ENCODE measurements at regions of chrX and their contacts with region 1.

Region 1: GRCh38 chrX:110847334-110847733 is 51.7 kb upstream of the CHRDL1 start:
- DNase-seq: peak; percentile 52 to 82 (median 66)
- H3K4me3 ChIP-seq: no peak overlapping the region
- H3K27ac ChIP-seq: no peak overlapping the region
- H3K4me1 ChIP-seq: no peaks in the 10 kb centered on the region
- H3K27me3 ChIP-seq: peaks cover 0 to 3% (median 0%) of the 10 kb centered on the region in 5 experiments

Region 2: GRCh38 chrX:110450050-110450449 is 397.3 kb before region 1 on chrX:
- CTCF ChIA-PET with region 1: interaction called, 25 read pairs
- POLR2A ChIA-PET with region 1: no interaction called
- DNase-seq: peak; percentile 42 to 79 (median 69)
- H3K4me3 ChIP-seq: no peak overlapping the region
- H3K27ac ChIP-seq: no peak overlapping the region
- H3K4me1 ChIP-seq: no peaks in the 10 kb centered on the region
- H3K27me3 ChIP-seq: peaks cover 0 to 23% (median 0%) of the 10 kb centered on the region in 5 experiments

Region 3: GRCh38 chrX:110462957-110463356 is 384.4 kb before region 1 on chrX:
- CTCF ChIA-PET with region 1: interaction called, 16 read pairs
- POLR2A ChIA-PET with region 1: no interaction called
- DNase-seq: peak in 1 of 3 donors; percentile 7
- H3K4me3 ChIP-seq: no peak overlapping the region
- H3K27ac ChIP-seq: no peak overlapping the region
- H3K4me1 ChIP-seq: no peaks in the 10 kb centered on the region
- H3K27me3 ChIP-seq: peaks cover 0 to 2% (median 0%) of the 10 kb centered on the region in 5 experiments

Region 4: GRCh38 chrX:110877326-110877725 is 30.0 kb after region 1 on chrX:
- CTCF ChIA-PET with region 1: no interaction called
- POLR2A ChIA-PET with region 1: no interaction called
- DNase-seq: no peak
- H3K4me3 ChIP-seq: no peak overlapping the region
- H3K27ac ChIP-seq: no peak overlapping the region
- H3K4me1 ChIP-seq: no peaks in the 10 kb centered on the region
- H3K27me3 ChIP-seq: peaks cover 0 to 7% (median 0%) of the 10 kb centered on the region in 5 experiments